ENCODE measurements at regions of chr2 and their contacts with region 1.

Region 1: GRCh38 chr2:170235860-170236679 is 58.1 kb downstream of the MYO3B start:
- DNase-seq: peak; percentile 80
- H3K4me3 ChIP-seq: no peak overlapping the region
- H3K27ac ChIP-seq: no peak overlapping the region
- H3K4me1 ChIP-seq: peaks cover 8% of the 10 kb centered on the region
- H3K27me3 ChIP-seq: peaks cover 9% of the 10 kb centered on the region
- CTCF ChIP-seq: peak; percentile 78

Region 2: DNA sequence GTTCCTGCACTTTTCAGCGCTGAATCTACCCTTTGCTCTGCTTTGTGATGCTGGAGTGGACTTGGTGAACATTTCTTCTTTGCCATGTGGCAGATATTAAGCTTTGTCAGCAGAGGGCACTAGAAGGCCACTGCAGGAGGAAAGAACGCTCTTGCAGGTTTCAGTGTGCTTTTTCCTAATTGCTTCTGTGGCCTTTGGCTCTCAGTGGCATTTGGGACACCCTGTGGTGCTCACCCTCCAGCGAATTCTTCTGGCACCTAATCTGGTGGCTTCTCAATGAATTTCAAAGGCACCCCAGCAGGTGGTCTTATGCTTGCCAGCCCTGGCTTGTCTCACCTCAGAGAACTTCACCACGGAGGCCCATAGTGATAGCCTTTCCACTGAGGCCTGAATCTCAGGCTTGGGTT is 88.6 kb after region 1 on chr2:
- CTCF ChIA-PET with region 1: no interaction called
- POLR2A ChIA-PET with region 1: no interaction called
- intact Hi-C with region 1: loop called (anchors 5 kb)
- DNase-seq: peak; percentile 74
- H3K4me3 ChIP-seq: no peak overlapping the region
- H3K27ac ChIP-seq: no peak overlapping the region
- H3K4me1 ChIP-seq: no peaks in the 10 kb centered on the region
- H3K27me3 ChIP-seq: no peaks in the 10 kb centered on the region
- CTCF ChIP-seq: peak; percentile 84

Region 3: GRCh38 chr2:170361090-170361936 is 125.2 kb after region 1 on chr2:
- CTCF ChIA-PET with region 1: interaction called, 4 read pairs
- POLR2A ChIA-PET with region 1: no interaction called
- intact Hi-C with region 1: loop called (anchors 5 kb)
- DNase-seq: peak; percentile 69
- H3K4me3 ChIP-seq: no peak overlapping the region
- H3K27ac ChIP-seq: no peak overlapping the region
- H3K4me1 ChIP-seq: no peaks in the 10 kb centered on the region
- H3K27me3 ChIP-seq: peaks cover 23% of the 10 kb centered on the region
- CTCF ChIP-seq: peak; percentile 77

Region 4: GRCh38 chr2:170873035-170873692 is 637.1 kb after region 1 on chr2:
- CTCF ChIA-PET with region 1: no interaction called
- POLR2A ChIA-PET with region 1: no interaction called
- intact Hi-C with region 1: loop called (anchors 5 kb)
- DNase-seq: peak; percentile 78
- H3K4me3 ChIP-seq: peak overlapping the region; percentile 26
- H3K27ac ChIP-seq: no peak overlapping the region
- H3K4me1 ChIP-seq: no peaks in the 10 kb centered on the region
- H3K27me3 ChIP-seq: no peaks in the 10 kb centered on the region
- CTCF ChIP-seq: peak; percentile 98

Measured in A673 (cell line).